CD8-positive, alpha-beta T cell (primary cell): ENCODE measurements at regions of chr3 and their contacts with region 1.

Region 1: GRCh38 chr3:101724329-101725193 is at the start of gene CEP97:
- DNase-seq: peak; percentile 67 to 92 (median 87)
- ATAC-seq: peak; percentile 94
- H3K4me3 ChIP-seq: peak within 1 kb of the TSS; percentile 82 to 99
- H3K4me3 Mint-ChIP-seq: peak within 1 kb of the TSS; percentile 100
- H3K27ac ChIP-seq: peak within 1 kb of the TSS; percentile 62 to 83
- H3K27ac Mint-ChIP-seq: peak within 1 kb of the TSS; percentile 98
- H3K4me1 ChIP-seq: peaks cover 29% of the 10 kb centered on the region
- H3K4me1 Mint-ChIP-seq: peaks cover 37% of the 10 kb centered on the region
- H3K27me3 ChIP-seq: no peaks in the 10 kb centered on the region
- H3K27me3 Mint-ChIP-seq: no peaks in the 10 kb centered on the region
- CTCF ChIP-seq: no peak
- total RNA-seq, gene CEP97: 3.4 to 5.3 TPM

Region 2: DNA sequence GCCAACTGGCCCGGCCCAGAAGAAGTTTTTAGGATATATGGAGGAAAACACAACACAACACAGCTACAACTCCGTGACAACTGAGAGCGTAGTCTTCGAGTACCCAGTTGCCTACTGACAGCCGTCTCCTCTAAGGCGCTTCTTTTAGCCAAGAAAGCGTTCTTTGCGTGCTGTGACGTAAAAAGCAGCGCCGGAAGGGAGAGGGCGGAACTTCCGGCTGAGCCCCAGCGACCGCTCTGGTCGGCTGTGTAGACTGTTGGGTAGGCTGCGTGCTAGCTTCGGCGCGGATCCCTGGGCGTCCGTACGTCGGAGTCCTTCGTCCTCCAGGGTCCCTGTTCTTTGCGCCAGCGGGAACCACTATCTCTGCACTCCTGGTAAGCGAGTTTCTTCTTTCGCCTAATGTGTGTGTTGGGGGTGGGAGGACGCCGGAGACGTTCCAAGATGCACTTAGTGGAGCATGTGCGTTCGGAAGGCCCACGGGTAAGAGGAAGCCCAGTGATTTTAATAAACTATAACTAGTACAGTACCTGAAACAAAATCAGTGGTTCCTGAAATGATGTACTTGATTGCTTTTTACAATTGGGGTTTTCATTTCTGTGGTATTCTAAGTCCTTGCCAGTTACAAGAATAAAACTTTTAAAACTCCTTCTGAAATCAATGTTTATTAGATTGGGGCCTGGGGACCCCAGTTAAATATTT is 162.8 kb before region 1 on chr3 and contains the start of gene TRMT10C:
- CTCF ChIA-PET with region 1: no interaction called
- POLR2A ChIA-PET with region 1: no interaction called
- intact Hi-C with region 1: no loop called
- DNase-seq: peak; percentile 86 to 96 (median 92)
- ATAC-seq: peak; percentile 95
- H3K4me3 ChIP-seq: peak within 1 kb of the TSS; percentile 83 to 96
- H3K4me3 Mint-ChIP-seq: peak within 1 kb of the TSS; percentile 99
- H3K27ac ChIP-seq: peak within 1 kb of the TSS; percentile 86 to 93
- H3K27ac Mint-ChIP-seq: peak within 1 kb of the TSS; percentile 99
- H3K4me1 ChIP-seq: peaks cover 12% of the 10 kb centered on the region
- H3K4me1 Mint-ChIP-seq: peaks cover 27% of the 10 kb centered on the region
- H3K27me3 ChIP-seq: no peaks in the 10 kb centered on the region
- H3K27me3 Mint-ChIP-seq: peaks cover 1% of the 10 kb centered on the region
- CTCF ChIP-seq: no peak
- total RNA-seq, gene TRMT10C: 41.5 to 44.0 TPM

Region 3: DNA sequence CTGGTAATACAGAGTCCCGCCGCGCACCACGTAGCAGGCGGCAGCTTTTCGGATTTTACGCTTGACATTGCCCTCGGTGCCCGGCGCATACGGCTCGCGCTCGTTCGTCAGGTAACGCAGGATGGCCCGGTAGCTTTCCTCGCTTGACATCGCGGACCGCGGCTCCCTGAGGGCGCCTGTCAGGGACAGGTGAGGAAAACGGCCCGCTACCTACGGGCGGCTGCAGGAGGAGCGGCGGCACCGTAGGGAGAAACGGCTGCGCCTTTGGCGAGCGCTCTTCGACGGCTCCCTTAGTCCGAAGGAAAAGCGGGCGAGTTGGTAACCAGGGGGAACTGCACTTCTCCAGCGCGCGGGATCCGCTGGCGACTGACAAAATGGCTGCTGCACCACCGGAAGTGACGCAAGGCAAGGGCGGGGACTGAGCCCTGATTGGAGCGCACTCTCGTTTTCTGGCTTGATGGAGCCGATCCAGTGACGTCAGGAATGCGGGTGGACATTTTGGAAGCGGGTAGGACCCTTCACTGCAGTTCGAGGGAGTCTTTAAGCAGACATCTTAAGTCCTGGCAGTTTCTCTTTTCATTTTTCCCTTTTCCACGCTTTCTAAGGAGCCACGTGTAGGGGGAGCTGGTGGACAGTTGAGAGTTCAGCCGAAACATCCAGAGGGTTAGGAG is 47.7 kb before region 1 on chr3 and contains the start of gene ZBTB11:
- CTCF ChIA-PET with region 1: interaction called, 3 read pairs
- POLR2A ChIA-PET with region 1: interaction called, 6 read pairs
- intact Hi-C with region 1: loop called (anchors 1 kb)
- DNase-seq: peak; percentile 99 to 100 (median 100)
- ATAC-seq: peak; percentile 63
- H3K4me3 ChIP-seq: peak within 1 kb of the TSS; percentile 90 to 100
- H3K4me3 Mint-ChIP-seq: peak within 1 kb of the TSS; percentile 95
- H3K27ac ChIP-seq: peak within 1 kb of the TSS; percentile 97 to 99
- H3K27ac Mint-ChIP-seq: peak within 1 kb of the TSS; percentile 98
- H3K4me1 ChIP-seq: peaks cover 26% of the 10 kb centered on the region
- H3K4me1 Mint-ChIP-seq: peaks cover 49% of the 10 kb centered on the region
- H3K27me3 ChIP-seq: no peaks in the 10 kb centered on the region
- H3K27me3 Mint-ChIP-seq: no peaks in the 10 kb centered on the region
- CTCF ChIP-seq: no peak
- total RNA-seq, gene ZBTB11: 69.6 to 75.2 TPM

Region 4: DNA sequence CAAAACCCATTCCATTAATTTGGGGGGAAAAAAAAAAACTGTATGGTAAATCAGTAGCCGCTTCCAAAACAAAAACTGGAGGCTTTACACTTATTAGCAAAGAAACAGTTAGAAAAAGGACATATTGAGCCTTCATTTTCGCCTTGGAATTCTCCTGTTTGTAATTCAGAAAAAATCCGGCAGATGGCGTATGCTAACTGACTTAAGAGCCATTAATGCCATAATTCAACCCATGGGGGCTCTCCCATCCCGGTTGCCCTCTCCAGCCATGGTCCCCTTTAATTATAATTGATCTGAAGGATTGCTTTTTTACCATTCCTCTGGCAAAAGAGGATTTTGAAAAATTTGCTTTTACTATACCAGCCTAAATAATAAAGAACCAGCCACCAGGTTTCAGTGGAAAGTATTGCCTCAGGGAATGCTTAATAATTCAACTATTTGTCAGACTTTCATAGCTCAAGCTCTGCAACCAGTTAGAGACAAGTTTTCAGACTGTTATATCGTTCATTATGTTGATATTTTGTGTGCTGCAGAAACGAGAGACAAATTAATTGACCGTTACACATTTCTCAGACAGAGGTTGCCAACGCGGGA is 28.7 kb before region 1 on chr3:
- CTCF ChIA-PET with region 1: interaction called, 3 read pairs
- POLR2A ChIA-PET with region 1: no interaction called
- intact Hi-C with region 1: loop called (anchors 1 kb)
- DNase-seq: peak in 6 of 9 experiments; percentile 14 to 79 (median 52)
- ATAC-seq: peak; percentile 37
- H3K4me3 ChIP-seq: no peak overlapping the region
- H3K4me3 Mint-ChIP-seq: no peak overlapping the region
- H3K27ac ChIP-seq: no peak overlapping the region
- H3K27ac Mint-ChIP-seq: no peak overlapping the region
- H3K4me1 ChIP-seq: no peaks in the 10 kb centered on the region
- H3K4me1 Mint-ChIP-seq: peaks cover 2% of the 10 kb centered on the region
- H3K27me3 ChIP-seq: no peaks in the 10 kb centered on the region
- H3K27me3 Mint-ChIP-seq: no peaks in the 10 kb centered on the region
- CTCF ChIP-seq: peak; percentile 81

Region 5: DNA sequence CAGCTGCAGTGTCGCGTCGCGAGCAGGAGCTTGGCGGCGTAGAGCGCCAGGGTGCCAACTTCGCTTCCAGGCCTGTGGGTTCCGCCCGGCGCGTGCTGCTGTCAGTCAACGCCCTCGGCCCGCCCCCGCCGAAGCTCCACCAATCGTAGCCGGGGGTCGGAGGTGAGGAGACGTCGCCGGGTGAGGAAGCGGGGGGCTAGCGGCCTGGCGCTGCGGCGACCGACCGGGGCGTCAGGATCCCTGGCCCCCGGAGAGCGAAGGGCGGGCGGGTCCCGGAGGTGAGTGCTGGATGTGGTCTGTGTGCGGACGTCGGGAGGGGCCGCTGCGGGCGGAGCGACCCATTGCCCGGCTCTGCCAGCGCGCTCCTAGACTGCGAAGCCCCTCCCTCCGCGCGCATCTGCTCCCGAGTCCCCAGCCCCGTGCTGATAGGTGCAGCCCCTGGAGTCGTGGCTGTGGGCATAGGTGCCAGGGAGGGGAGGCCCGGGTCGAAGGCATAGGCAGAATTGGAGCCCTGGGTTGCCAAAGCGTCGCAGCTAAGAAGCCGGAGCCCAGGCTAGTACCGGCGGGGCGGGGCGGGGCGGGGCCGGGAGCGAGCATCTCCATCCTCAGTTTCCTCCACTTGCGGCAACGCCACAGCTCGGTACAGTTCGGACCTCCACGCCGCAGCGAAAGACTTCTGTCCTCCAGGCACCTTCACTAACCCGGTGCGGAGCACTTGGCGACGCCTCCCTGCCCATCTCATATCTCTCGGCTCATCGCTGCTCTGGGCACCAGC is 54.7 kb after region 1 on chr3 and contains the start of gene NXPE3:
- CTCF ChIA-PET with region 1: interaction called, 6 read pairs
- POLR2A ChIA-PET with region 1: interaction called, 16 read pairs
- intact Hi-C with region 1: loop called (anchors 1 kb)
- DNase-seq: peak; percentile 86 to 96 (median 94)
- ATAC-seq: peak; percentile 88
- H3K4me3 ChIP-seq: peak within 1 kb of the TSS; percentile 48 to 92
- H3K4me3 Mint-ChIP-seq: peak within 1 kb of the TSS; percentile 89
- H3K27ac ChIP-seq: peak within 1 kb of the TSS; percentile 77 to 88
- H3K27ac Mint-ChIP-seq: peak within 1 kb of the TSS; percentile 99
- H3K4me1 ChIP-seq: peaks cover 42% of the 10 kb centered on the region
- H3K4me1 Mint-ChIP-seq: peaks cover 57% of the 10 kb centered on the region
- H3K27me3 ChIP-seq: no peaks in the 10 kb centered on the region
- H3K27me3 Mint-ChIP-seq: no peaks in the 10 kb centered on the region
- CTCF ChIP-seq: no peak
- total RNA-seq, gene NXPE3: 39.8 to 40.3 TPM

Region 6: GRCh38 chr3:101936419-101937356 is 212.1 kb after region 1 on chr3:
- CTCF ChIA-PET with region 1: no interaction called
- POLR2A ChIA-PET with region 1: no interaction called
- intact Hi-C with region 1: loop called in 1 of 2 experiments (anchors 10 kb)
- DNase-seq: peak in 5 of 9 experiments; percentile 8 to 82 (median 31)
- ATAC-seq: peak; percentile 93
- H3K4me3 ChIP-seq: peak overlapping the region in 1 of 2 experiments; percentile 9
- H3K4me3 Mint-ChIP-seq: peak overlapping the region; percentile 45
- H3K27ac ChIP-seq: no peak overlapping the region
- H3K27ac Mint-ChIP-seq: peak overlapping the region; percentile 87
- H3K4me1 ChIP-seq: peaks cover 66% of the 10 kb centered on the region
- H3K4me1 Mint-ChIP-seq: peaks cover 22% of the 10 kb centered on the region
- H3K27me3 ChIP-seq: no peaks in the 10 kb centered on the region
- H3K27me3 Mint-ChIP-seq: no peaks in the 10 kb centered on the region
- CTCF ChIP-seq: no peak